ENCODE measurements at regions of chr10 and their contacts with region 1.

Region 1: GRCh38 chr10:110901954-110902819 is 16.8 kb downstream of the BBIP1 start:
- DNase-seq: no peak
- ATAC-seq: peak; percentile 49
- H3K4me3 ChIP-seq: no peak overlapping the region
- H3K27ac ChIP-seq: no peak overlapping the region
- H3K4me1 ChIP-seq: peaks cover 7% of the 10 kb centered on the region; the same call in 1 of the 2 replicates
- H3K27me3 ChIP-seq: no peaks in the 10 kb centered on the region
- CTCF ChIP-seq: no peak
- EP300 ChIP-seq: no peak
- POLR2A ChIP-seq: peak; percentile 12; the same call in 1 of the 2 replicates
- RAD21 ChIP-seq: no peak

Region 2: GRCh38 chr10:110883924-110884323 is 18.3 kb before region 1 on chr10:
- CTCF ChIA-PET with region 1: interaction called, 10 read pairs
- POLR2A ChIA-PET with region 1: interaction called, 12 read pairs
- RAD21 ChIA-PET with region 1: interaction called, 9 read pairs
- SMC1A ChIA-PET with region 1: interaction called, 43 read pairs
- in situ Hi-C with region 1: no loop called
- intact Hi-C with region 1: no loop called
- DNase-seq: no peak
- ATAC-seq: peak; percentile 5; the same call in 2 of the 3 replicates
- H3K4me3 ChIP-seq: no peak overlapping the region; the same call in 1 of the 2 replicates
- H3K27ac ChIP-seq: no peak overlapping the region
- H3K4me1 ChIP-seq: peaks cover 6% of the 10 kb centered on the region
- H3K27me3 ChIP-seq: no peaks in the 10 kb centered on the region
- CTCF ChIP-seq: no peak
- EP300 ChIP-seq: no peak
- POLR2A ChIP-seq: no peak
- RAD21 ChIP-seq: no peak

Region 3: GRCh38 chr10:110912374-110912773 is 10.2 kb after region 1 on chr10:
- CTCF ChIA-PET with region 1: interaction called, 14 read pairs
- POLR2A ChIA-PET with region 1: interaction called, 13 read pairs
- RAD21 ChIA-PET with region 1: interaction called, 19 read pairs
- SMC1A ChIA-PET with region 1: interaction called, 28 read pairs
- in situ Hi-C with region 1: no loop called
- intact Hi-C with region 1: no loop called
- DNase-seq: no peak
- ATAC-seq: no peak
- H3K4me3 ChIP-seq: no peak overlapping the region
- H3K27ac ChIP-seq: no peak overlapping the region
- H3K4me1 ChIP-seq: peaks cover 7% of the 10 kb centered on the region; the same call in 1 of the 2 replicates
- H3K27me3 ChIP-seq: no peaks in the 10 kb centered on the region
- CTCF ChIP-seq: no peak
- EP300 ChIP-seq: no peak
- POLR2A ChIP-seq: no peak
- RAD21 ChIP-seq: no peak

Region 4: DNA sequence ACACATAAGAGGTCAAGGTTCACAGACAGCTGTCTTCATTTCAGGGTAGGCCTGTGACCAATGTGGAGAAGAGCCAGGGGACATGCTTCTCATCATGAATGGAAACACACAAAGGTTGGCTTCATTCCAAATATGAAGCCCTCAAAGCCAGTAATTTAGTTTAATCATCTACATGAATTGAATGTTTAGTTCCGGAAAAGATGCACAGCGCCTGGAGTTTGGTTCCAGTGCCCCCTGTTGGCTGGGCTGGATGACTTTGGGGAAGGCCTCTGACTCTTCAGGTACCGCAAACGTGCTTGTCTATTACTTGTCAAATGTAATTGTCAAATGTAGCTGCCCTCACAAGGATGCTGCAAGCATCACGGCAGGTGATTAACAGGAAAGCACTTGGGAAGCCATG is 305.3 kb after region 1 on chr10:
- CTCF ChIA-PET with region 1: no interaction called
- POLR2A ChIA-PET with region 1: no interaction called
- RAD21 ChIA-PET with region 1: no interaction called
- SMC1A ChIA-PET with region 1: no interaction called
- in situ Hi-C with region 1: loop called (anchors 10 kb)
- intact Hi-C with region 1: loop called (anchors 10 kb)
- DNase-seq: no peak
- ATAC-seq: peak; percentile 63
- H3K4me3 ChIP-seq: no peak overlapping the region
- H3K27ac ChIP-seq: no peak overlapping the region
- H3K4me1 ChIP-seq: no peaks in the 10 kb centered on the region
- H3K27me3 ChIP-seq: peaks cover 0 to 2% of the 10 kb centered on the region in 2 experiments; a peak in 1 of 4 replicates
- CTCF ChIP-seq: peak; percentile 32 to 40 (median 39); a peak in 4 of 6 replicates
- EP300 ChIP-seq: no peak
- POLR2A ChIP-seq: no peak
- RAD21 ChIP-seq: peak; percentile 64